ENCODE measurements at regions of chr2 and their contacts with region 1.

Region 1: DNA sequence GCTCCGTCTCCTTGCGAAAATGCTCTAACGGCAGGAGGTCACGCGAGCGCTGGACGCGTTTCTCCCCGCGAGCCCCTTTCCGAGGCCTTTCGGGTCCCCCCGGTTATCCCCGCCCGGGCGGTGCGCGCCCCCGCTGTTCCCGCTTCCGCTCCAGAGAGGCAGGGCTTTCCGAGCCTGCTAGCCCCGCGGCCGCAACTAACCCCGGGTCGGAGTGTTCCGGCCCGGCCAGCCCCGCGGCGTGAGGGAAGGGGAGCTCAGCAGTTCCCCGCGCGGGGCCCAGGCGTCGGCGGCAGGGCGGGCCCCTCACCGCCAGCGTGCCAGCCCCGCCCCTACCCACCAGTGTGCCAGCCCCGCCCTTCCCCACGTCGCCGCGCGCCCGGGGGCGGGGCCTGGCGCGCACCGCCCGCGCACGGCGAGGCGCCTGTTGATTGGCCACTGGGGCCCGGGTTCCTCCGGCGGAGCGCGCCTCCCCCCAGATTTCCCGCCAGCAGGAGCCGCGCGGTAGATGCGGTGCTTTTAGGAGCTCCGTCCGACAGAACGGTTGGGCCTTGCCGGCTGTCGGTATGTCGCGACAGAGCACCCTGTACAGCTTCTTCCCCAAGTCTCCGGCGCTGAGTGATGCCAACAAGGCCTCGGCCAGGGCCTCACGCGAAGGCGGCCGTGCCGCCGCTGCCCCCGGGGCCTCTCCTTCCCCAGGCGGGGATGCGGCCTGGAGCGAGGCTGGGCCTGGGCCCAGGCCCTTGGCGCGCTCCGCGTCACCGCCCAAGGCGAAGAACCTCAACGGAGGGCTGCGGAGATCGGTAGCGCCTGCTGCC is at the start of gene MSH6:
- DNase-seq: peak; percentile 89
- H3K4me3 Mint-ChIP-seq: peak within 1 kb of the TSS; percentile 91
- H3K27ac Mint-ChIP-seq: peak within 1 kb of the TSS; percentile 84
- H3K4me1 Mint-ChIP-seq: peaks cover 21% of the 10 kb centered on the region
- H3K27me3 Mint-ChIP-seq: no peaks in the 10 kb centered on the region
- total RNA-seq, gene MSH6: 123 and 128 TPM in 2 replicates

Region 2: GRCh38 chr2:47402805-47403608 is 379.9 kb before region 1 on chr2 and contains the start of gene MSH2:
- intact Hi-C with region 1: loop called (anchors 1 kb)
- DNase-seq: peak; percentile 91
- H3K4me3 Mint-ChIP-seq: peak within 1 kb of the TSS; percentile 97
- H3K27ac Mint-ChIP-seq: peak within 1 kb of the TSS; percentile 96
- H3K4me1 Mint-ChIP-seq: peaks cover 28% of the 10 kb centered on the region
- H3K27me3 Mint-ChIP-seq: no peaks in the 10 kb centered on the region
- total RNA-seq, gene MSH2: 73.3 TPM in 2 replicates

Region 3: DNA sequence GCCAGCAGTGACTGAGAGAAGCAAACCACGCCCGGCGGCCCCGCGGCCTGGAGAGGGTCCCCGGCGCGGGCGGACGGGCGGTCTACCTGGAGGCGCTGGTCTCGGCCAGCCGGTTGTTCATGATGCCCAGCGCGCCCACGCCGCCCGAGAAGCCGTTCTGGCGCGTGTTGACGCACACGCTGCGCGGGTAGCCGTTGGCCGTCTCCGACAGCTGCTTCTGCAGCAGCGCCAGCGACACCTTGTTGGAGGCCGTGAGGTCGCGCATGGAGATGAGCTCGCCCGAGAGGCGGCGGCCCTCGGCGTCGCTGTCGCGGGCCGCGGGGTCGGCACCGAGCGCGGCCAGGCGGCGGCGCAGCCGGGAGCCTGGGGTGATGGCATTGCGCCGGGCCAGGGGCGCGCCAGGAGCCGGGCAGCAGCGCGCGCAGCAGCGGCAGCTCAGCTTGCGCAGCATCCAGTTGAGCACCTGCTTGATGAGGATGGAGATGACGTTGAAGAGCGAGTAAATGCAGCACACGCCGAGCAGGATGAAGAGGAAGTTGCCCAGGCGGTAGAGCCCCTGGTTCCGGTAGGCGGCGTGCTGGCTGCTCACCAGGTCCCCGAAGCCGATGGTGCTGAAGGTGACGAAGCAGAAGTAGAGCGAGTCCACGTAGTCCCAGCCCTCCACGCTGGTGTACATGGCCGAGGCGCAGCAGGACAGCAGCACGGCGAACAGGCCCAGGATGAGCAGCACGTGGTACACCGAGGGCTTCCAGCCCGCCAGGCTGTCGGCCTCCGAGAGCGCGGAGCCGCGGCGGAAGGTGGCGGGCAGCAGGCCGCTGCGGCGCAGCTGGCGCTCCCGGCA is 261.8 kb before region 1 on chr2:
- intact Hi-C with region 1: loop called (anchors 5 kb)
- DNase-seq: peak; percentile 70
- H3K4me3 Mint-ChIP-seq: peak overlapping the region; percentile 89
- H3K27ac Mint-ChIP-seq: peak overlapping the region; percentile 97
- H3K4me1 Mint-ChIP-seq: peaks cover 20% of the 10 kb centered on the region
- H3K27me3 Mint-ChIP-seq: no peaks in the 10 kb centered on the region

Region 4: DNA sequence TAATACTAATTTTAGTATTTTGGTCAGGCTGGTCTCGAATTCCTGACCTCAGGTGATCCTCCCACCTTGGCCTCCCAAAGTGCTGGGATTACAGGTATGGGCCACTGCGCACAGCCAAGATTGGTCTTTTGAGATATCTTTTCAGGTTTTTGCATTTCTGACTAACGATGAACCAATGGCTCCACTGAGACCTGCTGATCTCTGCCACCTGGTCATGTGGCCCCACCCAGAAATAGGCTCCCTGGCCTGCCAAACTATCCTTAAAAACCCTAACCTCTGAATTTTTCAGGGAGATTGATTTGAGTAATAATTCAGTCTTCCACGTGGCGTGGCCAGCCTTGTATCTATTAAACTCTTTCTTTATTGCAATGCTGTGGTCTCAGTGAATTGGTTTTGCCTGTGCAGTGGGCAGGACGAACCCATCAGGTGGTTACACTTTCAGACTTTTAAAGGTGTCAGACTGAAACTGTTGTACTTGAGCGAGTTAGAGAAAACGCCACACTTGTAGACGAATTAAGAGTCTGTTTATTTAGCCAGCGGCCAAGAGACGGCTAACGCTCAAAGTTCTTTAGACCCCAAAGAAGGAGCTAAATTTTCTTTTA is 85.8 kb before region 1 on chr2:
- intact Hi-C with region 1: no loop called
- DNase-seq: no peak
- H3K4me3 Mint-ChIP-seq: no peak overlapping the region
- H3K27ac Mint-ChIP-seq: no peak overlapping the region
- H3K4me1 Mint-ChIP-seq: no peaks in the 10 kb centered on the region
- H3K27me3 Mint-ChIP-seq: peaks cover 3% of the 10 kb centered on the region

Region 5: GRCh38 chr2:48105848-48106247 is 323.0 kb after region 1 on chr2:
- intact Hi-C with region 1: loop called (anchors 1 kb)
- DNase-seq: no peak
- H3K4me3 Mint-ChIP-seq: no peak overlapping the region
- H3K27ac Mint-ChIP-seq: no peak overlapping the region
- H3K4me1 Mint-ChIP-seq: peaks cover 23% of the 10 kb centered on the region
- H3K27me3 Mint-ChIP-seq: peaks cover 7% of the 10 kb centered on the region

Region 6: GRCh38 chr2:48420512-48421197 is 637.8 kb after region 1 on chr2:
- intact Hi-C with region 1: loop called (anchors 1 kb)
- DNase-seq: peak; percentile 88
- H3K4me3 Mint-ChIP-seq: no peak overlapping the region
- H3K27ac Mint-ChIP-seq: peak overlapping the region; percentile 72
- H3K4me1 Mint-ChIP-seq: peaks cover 52% of the 10 kb centered on the region
- H3K27me3 Mint-ChIP-seq: peaks cover 2% of the 10 kb centered on the region

Region 7: GRCh38 chr2:48448274-48449061 is 665.6 kb after region 1 on chr2:
- intact Hi-C with region 1: loop called (anchors 2 kb)
- DNase-seq: no peak
- H3K4me3 Mint-ChIP-seq: peak overlapping the region; percentile 81
- H3K27ac Mint-ChIP-seq: peak overlapping the region; percentile 95
- H3K4me1 Mint-ChIP-seq: peaks cover 53% of the 10 kb centered on the region
- H3K27me3 Mint-ChIP-seq: no peaks in the 10 kb centered on the region